B cell (primary cell): ENCODE measurements at regions of chr6 and their contacts with region 1.

Region 1: GRCh38 chr6:158686791-158687381 is 37.0 kb downstream of the SYTL3 start:
- DNase-seq: peak; percentile 76
- ATAC-seq: peak; percentile 75
- H3K4me3 ChIP-seq: no peak overlapping the region
- H3K4me3 Mint-ChIP-seq: peak overlapping the region; percentile 41
- H3K27ac ChIP-seq: peak overlapping the region; percentile 30 to 53
- H3K27ac Mint-ChIP-seq: peak overlapping the region; percentile 50
- H3K4me1 ChIP-seq: peaks cover 17 to 18% of the 10 kb centered on the region in 2 donors
- H3K4me1 Mint-ChIP-seq: peaks cover 25% of the 10 kb centered on the region
- H3K27me3 ChIP-seq: no peaks in the 10 kb centered on the region
- H3K27me3 Mint-ChIP-seq: no peaks in the 10 kb centered on the region
- CTCF ChIP-seq: no peak

Region 2: DNA sequence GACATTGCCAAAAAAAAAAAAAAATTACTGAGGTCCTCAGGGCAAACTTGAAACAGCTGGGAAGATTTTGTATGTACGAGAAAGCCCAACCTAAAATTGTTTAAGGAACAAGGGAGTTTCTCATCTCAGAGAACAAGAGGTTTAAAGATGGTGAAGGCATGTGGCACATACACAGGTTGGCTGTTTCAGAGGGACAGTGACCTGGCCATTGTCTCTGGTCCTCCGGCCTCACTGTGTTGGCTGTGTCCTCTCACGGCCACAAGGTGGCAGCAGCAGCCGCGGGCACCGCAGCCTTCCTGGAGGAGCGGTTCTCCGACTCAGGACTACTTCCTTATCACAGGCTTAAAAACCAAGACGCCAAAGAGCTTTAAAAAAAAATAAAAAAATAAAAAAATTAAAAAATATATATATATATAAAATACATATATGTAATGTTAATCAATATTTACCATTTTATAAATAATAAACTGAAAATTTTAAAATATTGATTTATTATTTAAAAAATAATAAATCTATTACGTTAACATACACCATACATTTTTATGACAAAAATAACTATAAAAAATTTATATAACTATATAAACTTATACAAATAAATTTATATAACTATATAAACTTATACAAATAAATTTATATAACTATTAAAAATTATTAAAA is 466.0 kb before region 1 on chr6:
- CTCF ChIA-PET with region 1: interaction called, 87 read pairs
- POLR2A ChIA-PET with region 1: no interaction called
- intact Hi-C with region 1: no loop called
- DNase-seq: peak; percentile 81
- ATAC-seq: peak; percentile 94
- H3K4me3 ChIP-seq: no peak overlapping the region
- H3K4me3 Mint-ChIP-seq: no peak overlapping the region
- H3K27ac ChIP-seq: no peak overlapping the region
- H3K27ac Mint-ChIP-seq: peak overlapping the region; percentile 65
- H3K4me1 ChIP-seq: no peaks in the 10 kb centered on the region
- H3K4me1 Mint-ChIP-seq: peaks cover 2% of the 10 kb centered on the region
- H3K27me3 ChIP-seq: no peaks in the 10 kb centered on the region
- H3K27me3 Mint-ChIP-seq: no peaks in the 10 kb centered on the region
- CTCF ChIP-seq: peak; percentile 98

Region 3: DNA sequence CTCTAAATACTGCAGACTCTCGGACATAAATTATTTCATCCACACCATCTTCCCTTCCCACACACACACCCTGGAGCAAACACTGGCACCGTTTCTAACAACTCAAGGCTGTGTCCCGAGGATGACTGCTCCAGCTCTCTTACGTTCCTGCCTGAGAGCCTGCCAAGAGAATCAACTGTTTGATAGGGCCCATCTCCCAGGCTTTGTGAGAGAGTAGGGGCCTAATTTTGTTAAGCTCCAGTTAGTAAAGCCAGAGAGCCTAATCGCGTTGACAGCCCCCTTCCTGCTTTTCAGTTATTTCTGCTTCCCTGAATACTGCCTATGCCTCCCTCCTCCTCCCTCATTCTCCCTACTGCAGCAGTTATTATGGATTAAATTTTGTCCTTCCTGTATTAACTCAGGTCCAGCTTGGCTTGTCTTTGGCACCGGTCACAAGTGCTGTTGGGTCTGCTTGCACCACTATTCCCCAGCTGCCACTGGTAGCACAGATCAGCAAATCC is 245.1 kb before region 1 on chr6:
- CTCF ChIA-PET with region 1: no interaction called
- POLR2A ChIA-PET with region 1: no interaction called
- intact Hi-C with region 1: no loop called
- DNase-seq: no peak
- ATAC-seq: no peak
- H3K4me3 ChIP-seq: no peak overlapping the region
- H3K4me3 Mint-ChIP-seq: no peak overlapping the region
- H3K27ac ChIP-seq: no peak overlapping the region
- H3K27ac Mint-ChIP-seq: no peak overlapping the region
- H3K4me1 ChIP-seq: peaks cover 7 to 8% of the 10 kb centered on the region in 2 donors
- H3K4me1 Mint-ChIP-seq: peaks cover 17% of the 10 kb centered on the region
- H3K27me3 ChIP-seq: no peaks in the 10 kb centered on the region
- H3K27me3 Mint-ChIP-seq: no peaks in the 10 kb centered on the region
- CTCF ChIP-seq: no peak

Region 4: DNA sequence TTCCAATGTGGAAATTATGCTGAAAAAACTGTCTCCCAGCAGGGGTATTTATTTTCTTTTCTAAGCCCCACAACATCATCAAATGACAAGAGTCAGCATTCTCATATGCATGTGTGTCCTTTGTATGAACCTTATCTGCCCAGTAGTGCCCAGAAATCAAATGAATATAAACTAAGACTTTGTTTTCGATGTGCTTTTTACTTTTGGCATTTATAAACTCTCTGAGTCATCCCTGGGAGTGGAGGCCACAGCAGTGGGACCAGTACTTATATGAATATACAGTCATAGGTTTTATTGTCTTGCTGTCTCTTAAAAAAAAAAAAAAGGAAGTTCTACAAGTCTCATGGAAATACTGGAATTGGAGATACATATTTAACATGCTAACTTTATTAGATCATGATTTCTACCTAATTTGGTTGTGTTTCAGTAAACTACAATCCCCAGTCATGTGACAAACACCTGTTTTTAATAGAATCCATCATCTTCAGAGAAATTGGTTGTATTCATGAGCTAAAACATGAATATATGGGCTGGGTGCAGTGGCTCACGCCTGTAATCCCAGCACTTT is 226.2 kb before region 1 on chr6:
- CTCF ChIA-PET with region 1: no interaction called
- POLR2A ChIA-PET with region 1: no interaction called
- intact Hi-C with region 1: no loop called
- DNase-seq: no peak
- ATAC-seq: no peak
- H3K4me3 ChIP-seq: no peak overlapping the region
- H3K4me3 Mint-ChIP-seq: no peak overlapping the region
- H3K27ac ChIP-seq: no peak overlapping the region
- H3K27ac Mint-ChIP-seq: no peak overlapping the region
- H3K4me1 ChIP-seq: no peaks in the 10 kb centered on the region
- H3K4me1 Mint-ChIP-seq: no peaks in the 10 kb centered on the region
- H3K27me3 ChIP-seq: no peaks in the 10 kb centered on the region
- H3K27me3 Mint-ChIP-seq: no peaks in the 10 kb centered on the region
- CTCF ChIP-seq: no peak

Region 5: DNA sequence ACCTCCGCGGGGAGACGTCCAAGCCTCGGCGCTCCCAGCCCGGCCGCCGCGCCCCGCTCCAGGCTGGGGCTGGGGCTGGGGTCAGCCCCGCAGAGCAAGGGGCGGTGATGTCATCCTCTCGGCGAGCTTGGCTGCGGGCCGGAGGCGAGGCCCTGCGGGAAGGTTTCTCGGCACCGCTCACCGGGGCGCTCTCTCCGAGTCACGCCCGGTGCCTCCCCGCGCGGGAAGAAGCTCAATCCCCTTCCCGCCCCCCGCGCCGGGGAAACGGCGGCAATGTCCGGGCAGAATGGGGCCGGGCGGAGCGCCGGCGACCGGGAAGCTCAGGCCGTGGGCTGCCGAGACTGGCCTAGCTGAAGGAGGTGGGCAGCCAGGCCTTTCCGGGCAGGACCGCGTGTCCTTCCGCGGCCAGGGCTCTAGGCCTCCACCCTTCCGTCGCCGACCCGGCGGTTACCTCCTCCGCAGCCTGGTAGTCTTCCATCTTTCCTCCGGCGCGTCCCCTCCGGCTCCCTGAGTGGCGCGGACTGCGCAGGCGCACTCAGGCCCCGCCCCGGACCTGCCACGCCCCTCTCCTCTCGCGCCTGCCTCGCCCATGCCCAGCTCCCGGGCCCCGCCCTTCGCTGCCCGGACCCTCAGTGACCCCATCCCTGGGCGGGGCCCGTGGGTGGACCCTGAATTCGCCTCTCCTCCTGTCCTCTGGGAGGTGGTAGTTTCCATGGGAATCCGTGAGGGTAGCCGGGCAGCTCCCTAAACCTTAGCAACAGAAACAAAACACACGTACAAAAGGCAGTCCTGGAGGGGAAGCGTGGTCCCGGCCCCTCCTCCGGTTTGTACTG is 42.4 kb before region 1 on chr6 and contains the start of gene DYNLT1:
- CTCF ChIA-PET with region 1: interaction called, 17 read pairs
- POLR2A ChIA-PET with region 1: no interaction called
- intact Hi-C with region 1: loop called (anchors 5 kb)
- DNase-seq: peak; percentile 91
- ATAC-seq: peak; percentile 85
- H3K4me3 ChIP-seq: peak within 1 kb of the TSS; percentile 86 to 99 (median 97)
- H3K4me3 Mint-ChIP-seq: peak within 1 kb of the TSS; percentile 98
- H3K27ac ChIP-seq: peak within 1 kb of the TSS; percentile 90 to 91
- H3K27ac Mint-ChIP-seq: peak within 1 kb of the TSS; percentile 97
- H3K4me1 ChIP-seq: peaks cover 14 to 31% of the 10 kb centered on the region in 2 donors
- H3K4me1 Mint-ChIP-seq: peaks cover 51% of the 10 kb centered on the region
- H3K27me3 ChIP-seq: no peaks in the 10 kb centered on the region
- H3K27me3 Mint-ChIP-seq: no peaks in the 10 kb centered on the region
- CTCF ChIP-seq: no peak
- total RNA-seq, gene DYNLT1: 34.8 and 38.5 TPM in 2 replicates

Region 6: GRCh38 chr6:158660333-158660754 is 26.5 kb before region 1 on chr6:
- CTCF ChIA-PET with region 1: interaction called, 48 read pairs
- POLR2A ChIA-PET with region 1: interaction called, 3 read pairs
- intact Hi-C with region 1: loop called (anchors 1 kb)
- DNase-seq: peak; percentile 72
- ATAC-seq: peak; percentile 84
- H3K4me3 ChIP-seq: no peak overlapping the region
- H3K4me3 Mint-ChIP-seq: no peak overlapping the region
- H3K27ac ChIP-seq: no peak overlapping the region
- H3K27ac Mint-ChIP-seq: no peak overlapping the region
- H3K4me1 ChIP-seq: peaks cover 9 to 12% of the 10 kb centered on the region in 2 donors
- H3K4me1 Mint-ChIP-seq: peaks cover 8% of the 10 kb centered on the region
- H3K27me3 ChIP-seq: peaks cover 0 to 10% (median 5%) of the 10 kb centered on the region in 4 experiments
- H3K27me3 Mint-ChIP-seq: peaks cover 13% of the 10 kb centered on the region
- CTCF ChIP-seq: peak; percentile 77

Region 7: DNA sequence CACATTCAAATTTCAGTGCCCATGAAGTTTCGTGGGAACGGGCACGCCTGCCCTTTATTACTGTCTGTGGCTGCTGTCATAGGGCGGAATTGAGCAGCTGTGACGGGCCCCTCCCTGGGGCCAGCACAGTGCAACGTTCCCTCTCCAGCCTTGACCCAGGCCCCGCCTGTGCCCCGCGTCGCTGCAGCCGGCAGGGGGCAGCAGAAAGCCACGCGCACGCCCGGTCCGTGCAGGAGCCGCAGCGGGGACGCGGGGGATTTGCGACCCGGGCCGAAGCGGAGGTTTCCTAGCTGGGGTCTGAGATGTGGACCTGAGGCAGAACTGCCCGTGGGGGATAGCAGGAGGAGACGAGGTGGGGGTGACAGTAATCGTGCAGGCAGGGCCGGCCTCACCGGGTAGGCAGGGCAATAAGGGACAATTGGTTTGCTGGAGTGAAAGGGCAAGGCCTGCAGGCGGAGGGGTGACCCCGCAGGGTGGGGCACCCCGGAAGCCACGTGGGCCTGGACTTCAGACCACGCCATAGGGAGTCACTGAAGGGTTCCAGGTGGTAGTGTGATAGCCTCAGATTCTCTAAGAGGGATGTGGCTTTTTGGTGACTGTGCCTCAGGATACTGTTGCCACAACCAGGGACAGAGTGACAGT is 17.4 kb after region 1 on chr6:
- CTCF ChIA-PET with region 1: interaction called, 26 read pairs
- POLR2A ChIA-PET with region 1: no interaction called
- intact Hi-C with region 1: no loop called
- DNase-seq: peak; percentile 90
- ATAC-seq: peak; percentile 98
- H3K4me3 ChIP-seq: peak overlapping the region in 4 of 5 experiments; percentile 33 to 59 (median 52)
- H3K4me3 Mint-ChIP-seq: peak overlapping the region; percentile 92
- H3K27ac ChIP-seq: peak overlapping the region in 1 of 2 donors; percentile 36
- H3K27ac Mint-ChIP-seq: peak overlapping the region; percentile 89
- H3K4me1 ChIP-seq: peaks cover 19 to 30% of the 10 kb centered on the region in 2 donors
- H3K4me1 Mint-ChIP-seq: peaks cover 27% of the 10 kb centered on the region
- H3K27me3 ChIP-seq: no peaks in the 10 kb centered on the region
- H3K27me3 Mint-ChIP-seq: no peaks in the 10 kb centered on the region
- CTCF ChIP-seq: peak; percentile 99

Region 8: DNA sequence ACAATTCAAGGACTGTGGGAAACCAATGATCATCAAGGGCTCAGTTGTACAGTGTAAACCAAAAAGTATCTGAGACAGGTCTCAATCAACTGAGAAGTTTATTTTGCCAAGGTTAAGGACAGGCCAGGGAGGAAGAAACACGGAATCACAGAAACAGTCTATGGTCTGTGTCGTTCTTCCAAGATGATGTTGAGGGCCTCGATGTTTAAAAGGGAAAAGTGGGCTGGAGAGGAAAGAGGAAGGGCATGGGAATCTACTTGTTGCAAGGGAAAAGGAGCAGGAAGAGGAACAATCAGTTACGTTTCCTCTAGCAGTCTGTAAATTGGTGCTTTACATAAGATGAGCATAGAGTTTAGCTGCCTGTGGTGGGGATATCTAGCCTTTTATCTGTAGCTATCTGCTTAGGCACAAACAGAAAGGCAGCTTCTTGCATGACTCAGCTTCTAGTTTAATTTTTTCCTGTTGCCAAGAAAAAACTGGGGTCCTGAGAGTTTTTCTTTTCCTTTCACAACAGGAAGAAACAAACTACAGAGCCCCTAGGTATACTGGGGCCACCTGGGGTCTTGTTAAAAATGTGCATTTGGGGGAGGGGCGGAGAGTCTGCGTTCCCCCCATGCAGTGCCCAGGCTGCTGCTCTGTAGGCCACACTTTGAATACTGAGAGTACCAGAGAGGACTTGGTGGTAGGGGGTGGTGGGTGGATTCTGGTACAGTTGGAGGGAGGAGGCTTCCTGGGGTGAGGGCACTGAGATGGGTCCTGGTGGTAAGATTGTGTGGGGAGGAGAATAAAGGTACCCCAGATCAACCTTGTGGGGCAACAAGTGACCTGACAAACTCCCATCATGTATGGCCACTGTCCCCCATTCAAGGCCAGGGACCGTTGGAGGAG is 167.6 kb after region 1 on chr6:
- CTCF ChIA-PET with region 1: no interaction called
- POLR2A ChIA-PET with region 1: no interaction called
- intact Hi-C with region 1: no loop called
- DNase-seq: peak; percentile 60
- ATAC-seq: no peak
- H3K4me3 ChIP-seq: peak overlapping the region in 4 of 5 experiments; percentile 20 to 56 (median 48)
- H3K4me3 Mint-ChIP-seq: no peak overlapping the region
- H3K27ac ChIP-seq: peak overlapping the region; percentile 85 to 90
- H3K27ac Mint-ChIP-seq: no peak overlapping the region
- H3K4me1 ChIP-seq: peaks cover 71 to 85% of the 10 kb centered on the region in 2 donors
- H3K4me1 Mint-ChIP-seq: peaks cover 46% of the 10 kb centered on the region
- H3K27me3 ChIP-seq: no peaks in the 10 kb centered on the region
- H3K27me3 Mint-ChIP-seq: no peaks in the 10 kb centered on the region
- CTCF ChIP-seq: no peak